AG04449 (cell line): ENCODE measurements at regions of chr10 and their contacts with region 1.

Region 1: GRCh38 chr10:14837757-14838581 is at the starts of genes CDNF, HSPA14 and MSANTD7:
- DNase-seq: peak; percentile 92
- H3K4me3 ChIP-seq: peak within 1 kb of the TSS; percentile 98
- CTCF ChIP-seq: no peak

Region 2: DNA sequence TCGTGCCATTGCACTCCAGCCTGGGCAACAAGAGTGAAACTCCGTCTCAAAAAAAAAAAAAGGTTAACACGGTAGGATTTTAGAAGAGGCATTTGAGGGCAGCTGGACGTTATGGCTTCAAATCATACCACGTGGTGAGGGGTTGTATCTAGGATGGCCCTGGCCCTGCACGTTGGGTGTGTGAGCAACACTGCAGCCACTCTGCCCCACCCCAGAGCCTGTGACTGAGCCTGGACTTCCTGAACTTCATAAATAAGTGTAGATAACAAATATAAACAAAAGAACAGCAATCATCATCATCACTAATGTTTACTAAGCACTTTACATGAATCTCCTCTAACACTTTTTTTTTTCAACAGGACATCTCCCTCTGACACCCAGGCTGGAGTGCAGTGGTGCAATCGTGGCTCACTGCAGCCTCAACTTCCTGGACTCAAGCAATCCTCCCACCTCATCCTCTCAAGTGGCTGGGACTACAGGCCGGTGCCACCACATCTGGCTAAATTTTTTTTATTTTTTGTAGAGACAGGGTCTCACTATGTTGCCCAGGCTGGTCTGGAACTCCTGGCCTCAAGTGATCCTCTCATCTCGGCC is 337.7 kb before region 1 on chr10:
- CTCF ChIA-PET with region 1: interaction called, 16 read pairs
- POLR2A ChIA-PET with region 1: no interaction called
- DNase-seq: no peak
- H3K4me3 ChIP-seq: no peak overlapping the region
- CTCF ChIP-seq: no peak

Region 3: DNA sequence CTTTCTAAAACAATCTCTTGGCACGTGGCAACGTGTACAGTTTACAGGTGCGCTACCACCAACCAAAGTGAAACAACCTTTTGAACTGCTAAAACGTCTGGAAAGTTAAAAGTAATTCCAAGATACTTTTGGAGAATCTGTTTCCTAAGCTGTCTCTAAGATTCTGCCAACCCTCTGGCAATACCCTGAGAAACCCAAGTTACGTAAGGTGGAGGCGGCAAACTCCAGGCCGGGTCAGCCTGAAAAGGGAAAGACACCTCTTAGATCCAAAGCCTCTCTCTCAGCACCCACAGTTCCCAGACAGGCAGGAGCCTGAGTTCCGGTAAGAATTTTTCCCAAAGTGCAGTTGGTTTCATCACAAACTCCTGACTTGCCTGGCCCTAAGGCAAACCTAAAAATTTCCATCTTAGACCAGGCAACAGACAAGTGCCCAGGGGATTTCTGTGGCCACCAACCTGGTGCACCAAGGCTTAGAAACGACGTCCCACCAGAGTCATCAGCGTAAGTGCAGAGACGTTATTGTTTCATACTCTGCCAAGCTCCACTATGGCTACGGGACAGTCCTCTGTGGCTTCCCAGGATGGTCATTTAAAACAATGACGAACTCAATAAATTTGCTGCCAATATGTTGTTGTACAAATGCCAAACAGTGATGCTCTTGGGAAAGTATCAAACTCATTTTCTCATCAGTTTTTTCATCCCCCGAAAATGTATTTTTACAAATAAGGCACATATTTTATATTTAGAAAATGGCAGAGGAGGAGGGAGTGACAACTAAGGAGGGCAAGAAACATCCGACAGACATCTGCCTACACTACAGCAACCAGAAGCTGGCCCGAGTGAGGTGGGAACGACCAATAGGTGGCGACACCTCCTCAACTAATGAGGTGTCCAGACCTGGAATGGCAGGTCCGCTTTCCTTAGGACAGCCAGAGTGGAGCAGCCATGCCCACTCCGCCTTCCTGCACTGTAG is 301.4 kb before region 1 on chr10:
- CTCF ChIA-PET with region 1: interaction called, 23 read pairs
- POLR2A ChIA-PET with region 1: no interaction called
- DNase-seq: no peak
- H3K4me3 ChIP-seq: no peak overlapping the region
- CTCF ChIP-seq: peak; percentile 68

Region 4: GRCh38 chr10:14782691-14783363 is 55.1 kb before region 1 on chr10:
- CTCF ChIA-PET with region 1: no interaction called
- POLR2A ChIA-PET with region 1: no interaction called
- DNase-seq: no peak
- H3K4me3 ChIP-seq: no peak overlapping the region
- CTCF ChIP-seq: no peak

Region 5: GRCh38 chr10:14878266-14879054 is 40.5 kb after region 1 on chr10 and contains the start of gene SUV39H2:
- CTCF ChIA-PET with region 1: interaction called, 3 read pairs
- POLR2A ChIA-PET with region 1: interaction called, 10 read pairs
- DNase-seq: no peak
- H3K4me3 ChIP-seq: peak within 1 kb of the TSS; percentile 99
- CTCF ChIP-seq: no peak

Region 6: DNA sequence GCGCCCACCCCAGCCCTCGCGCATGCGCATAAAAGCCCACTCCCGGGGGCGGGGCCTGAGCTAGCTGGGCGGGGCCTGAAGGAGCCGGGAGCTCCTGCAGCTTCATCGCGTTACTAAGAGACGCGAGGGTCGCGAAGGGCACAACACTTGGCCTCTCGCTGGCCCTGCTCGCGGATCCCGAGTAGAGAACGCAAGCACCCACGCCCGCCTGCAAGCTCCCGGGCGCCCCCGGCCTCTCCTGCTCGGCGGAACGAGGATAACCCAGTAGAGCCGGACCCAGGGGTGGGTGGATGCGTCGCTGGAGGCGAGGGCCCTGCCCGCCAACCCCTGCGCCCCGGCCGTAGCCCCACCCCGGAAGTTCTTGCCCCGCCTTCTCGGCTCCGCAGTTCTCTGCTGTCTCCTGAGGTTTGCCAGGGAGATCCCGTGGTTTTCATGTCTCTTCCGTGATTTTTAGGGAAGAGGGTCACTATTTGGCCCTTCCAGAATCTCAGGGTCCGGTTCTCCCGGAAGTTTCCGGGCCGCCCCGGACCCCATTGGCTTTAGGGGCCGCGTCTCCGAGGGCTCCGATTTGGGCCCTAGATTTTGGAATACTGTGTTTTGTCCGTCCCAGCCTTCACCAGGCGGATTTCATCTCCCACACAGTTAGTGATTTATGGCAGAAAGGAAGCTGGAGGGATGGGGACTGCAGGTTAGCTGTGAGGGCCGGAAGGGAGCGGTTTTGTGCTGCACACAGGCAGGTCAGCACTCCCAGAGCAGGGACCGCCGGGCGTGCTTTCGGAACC is 121.5 kb after region 1 on chr10 and contains the start of gene MEIG1:
- CTCF ChIA-PET with region 1: no interaction called
- POLR2A ChIA-PET with region 1: no interaction called
- DNase-seq: peak; percentile 47
- H3K4me3 ChIP-seq: peak within 1 kb of the TSS; percentile 83
- CTCF ChIP-seq: no peak